ENCODE measurements at regions of chr17 and their contacts with region 1.

Region 1: DNA sequence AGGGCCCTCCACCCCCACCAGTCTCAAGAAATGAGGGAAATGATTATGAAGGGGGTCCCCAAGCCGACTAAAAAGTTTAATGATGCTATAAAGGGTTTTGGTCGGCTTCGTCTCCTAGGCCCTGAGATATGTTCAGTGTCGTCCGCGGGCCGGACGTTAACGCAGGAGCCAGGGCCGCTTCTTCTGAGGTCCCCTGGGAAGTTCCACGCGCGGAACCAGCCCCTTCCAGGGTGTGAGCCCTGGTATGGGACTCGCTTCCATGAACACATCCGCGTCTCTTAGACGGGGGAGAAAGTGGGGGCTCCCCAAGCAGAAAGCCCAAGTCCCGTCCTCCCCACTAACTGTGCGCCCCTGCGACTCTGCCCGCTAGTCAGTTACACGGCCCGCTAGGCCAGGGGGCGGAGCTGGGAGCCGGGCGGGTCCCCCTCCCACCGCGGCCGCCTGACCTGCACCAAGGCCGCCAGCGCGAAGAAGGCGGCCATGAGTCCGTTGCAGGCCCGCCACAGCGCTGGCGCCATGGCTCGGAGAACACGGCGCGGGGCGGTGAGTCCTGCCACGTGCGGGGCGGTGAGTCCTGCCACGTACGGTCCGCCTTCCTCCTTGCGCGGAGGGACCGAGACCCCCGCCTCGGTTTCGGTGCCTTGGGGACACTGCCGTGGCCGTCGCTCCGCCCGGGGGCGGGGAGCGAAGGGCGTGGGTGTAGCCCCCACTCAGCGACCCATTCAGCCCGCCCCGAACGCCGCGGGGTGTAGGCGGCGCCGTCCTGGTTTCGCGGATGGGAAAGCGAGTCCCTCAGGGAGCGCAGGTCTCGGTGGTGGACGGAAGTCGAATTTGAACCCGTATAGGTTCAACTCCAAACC is at the start of gene TMEM220:
- DNase-seq: peak; percentile 87
- ATAC-seq: peak; percentile 97
- total RNA-seq, gene TMEM220: 7.7 to 8.0 TPM

Region 2: DNA sequence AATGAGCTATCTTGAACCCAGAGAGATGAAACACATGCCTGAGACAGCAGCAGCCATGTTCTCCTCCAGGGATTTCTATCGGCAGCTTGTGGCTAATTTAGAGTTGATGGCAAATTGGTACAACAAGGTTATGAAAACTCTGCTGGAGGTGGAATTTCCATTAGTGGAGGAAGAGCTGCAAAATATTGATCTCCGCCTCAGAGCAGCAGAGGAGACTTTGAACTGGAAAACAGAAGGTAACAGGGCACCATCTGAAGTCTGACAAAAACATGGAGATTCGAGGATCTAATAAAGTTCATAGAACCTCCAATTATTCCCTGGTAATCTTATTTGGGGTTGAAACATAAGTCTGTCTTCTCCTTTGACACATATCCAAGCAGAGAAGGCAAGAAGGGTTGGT is 921.5 kb after region 1 on chr17:
- intact Hi-C with region 1: loop called in 1 of 2 experiments (anchors 10 kb)
- DNase-seq: no peak
- ATAC-seq: no peak

Measured in left cardiac atrium (tissue), 4 donors.